Activated CD4-positive, alpha-beta memory T cell treated with anti-CD3 and anti-CD28 coated beads, Interleukin-2, amount 10 ng/mL, durations not matched to agents 7 days and 5 days (primary cell): ENCODE measurements at regions of chr21 and their contacts with region 1.

Region 1: GRCh38 chr21:42187976-42188653 is 30.8 kb upstream of the ABCG1 start:
- DNase-seq: peak; percentile 90
- H3K4me3 Mint-ChIP-seq: peak overlapping the region; percentile 28
- H3K27ac Mint-ChIP-seq: peak overlapping the region; percentile 95
- H3K4me1 Mint-ChIP-seq: peaks cover 71% of the 10 kb centered on the region
- H3K27me3 Mint-ChIP-seq: peaks cover 10% of the 10 kb centered on the region

Region 2: DNA sequence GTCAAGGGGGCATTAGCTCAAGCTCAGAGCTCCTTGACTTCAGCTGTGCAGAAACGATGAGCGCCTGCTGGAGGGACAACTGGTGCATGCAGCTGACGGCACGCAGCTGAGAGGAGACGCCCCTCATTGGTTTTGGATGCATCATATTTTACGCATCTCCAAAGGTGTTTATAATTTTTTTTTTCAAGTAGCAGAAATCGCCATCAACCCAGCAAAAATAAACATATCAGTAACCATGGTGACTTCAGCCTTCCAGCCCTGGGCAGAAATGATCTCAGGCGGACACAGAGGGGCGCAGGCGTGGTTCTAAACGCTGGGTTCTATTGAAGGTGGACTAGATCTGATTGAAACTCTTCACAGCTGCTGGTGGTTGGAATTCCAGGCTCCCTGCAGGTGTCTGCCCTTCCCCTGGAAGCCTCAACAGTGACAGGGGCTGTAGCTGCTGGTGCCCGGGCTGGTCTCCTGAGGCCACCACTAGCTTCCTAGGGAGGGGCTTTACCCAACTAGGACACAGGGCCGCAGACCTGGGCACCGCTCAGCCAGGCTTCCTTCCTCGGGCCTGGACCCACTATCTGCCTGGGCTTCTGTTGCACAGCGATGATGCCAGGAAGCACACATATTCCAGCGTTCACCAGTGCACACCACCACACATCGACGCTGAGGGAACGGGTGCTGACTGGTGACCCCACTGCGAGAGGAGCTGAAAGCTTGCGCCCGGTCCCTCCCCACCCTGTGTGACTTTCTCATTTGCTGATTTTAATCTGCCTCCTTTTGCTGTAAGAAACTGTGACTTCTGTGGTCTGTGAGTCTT is 32.9 kb before region 1 on chr21:
- CTCF ChIA-PET with region 1: no interaction called
- POLR2A ChIA-PET with region 1: no interaction called
- DNase-seq: no peak
- H3K4me3 Mint-ChIP-seq: no peak overlapping the region
- H3K27ac Mint-ChIP-seq: no peak overlapping the region
- H3K4me1 Mint-ChIP-seq: no peaks in the 10 kb centered on the region
- H3K27me3 Mint-ChIP-seq: peaks cover 10% of the 10 kb centered on the region

Region 3: DNA sequence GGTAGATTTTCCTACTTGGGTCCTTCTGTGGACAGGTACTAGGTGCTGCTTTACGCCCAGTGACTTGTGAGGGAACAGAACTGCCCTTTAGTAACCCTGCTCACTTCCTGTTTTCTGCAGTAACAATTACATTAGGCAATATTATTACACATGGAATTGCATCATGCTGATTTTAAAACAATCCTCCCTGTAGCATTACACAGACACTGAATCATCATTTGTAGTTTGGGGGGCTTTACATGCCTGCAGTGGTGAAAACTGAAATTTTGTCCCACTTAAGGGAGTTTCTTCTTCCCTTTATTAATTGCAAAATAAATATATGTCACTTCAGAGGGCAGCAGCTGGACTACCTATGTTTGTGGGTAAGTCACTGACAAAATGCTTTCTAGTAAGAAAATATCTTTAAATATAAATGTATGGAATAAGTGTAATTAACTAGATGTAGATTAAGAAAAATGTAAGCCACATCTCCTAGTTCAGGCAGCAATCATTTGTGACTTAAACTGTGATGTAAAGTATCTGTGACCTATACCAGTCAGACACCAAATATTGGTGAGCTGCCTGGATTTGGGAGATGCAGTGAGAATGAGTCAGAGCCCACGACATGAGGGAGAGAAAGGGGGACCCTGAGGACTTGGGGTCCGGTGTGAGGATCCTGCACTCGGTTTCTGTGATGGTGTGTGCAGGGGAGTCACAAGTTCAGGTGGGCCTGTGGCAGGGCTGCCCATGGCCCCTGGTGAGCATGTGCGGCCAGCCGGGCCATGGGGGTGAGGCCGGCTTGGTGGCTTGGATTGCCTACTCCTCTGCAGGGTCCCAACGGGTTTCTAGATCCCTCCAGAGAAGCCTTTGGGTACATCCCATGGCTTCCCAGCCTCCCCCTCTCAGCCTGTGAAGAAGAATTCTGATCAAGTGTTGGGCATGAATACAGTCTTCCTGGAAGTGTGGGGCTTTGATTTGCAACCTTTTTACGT is 11.7 kb after region 1 on chr21:
- CTCF ChIA-PET with region 1: no interaction called
- POLR2A ChIA-PET with region 1: interaction called, 10 read pairs
- DNase-seq: peak; percentile 19
- H3K4me3 Mint-ChIP-seq: no peak overlapping the region
- H3K27ac Mint-ChIP-seq: peak overlapping the region; percentile 60
- H3K4me1 Mint-ChIP-seq: peaks cover 34% of the 10 kb centered on the region
- H3K27me3 Mint-ChIP-seq: peaks cover 10% of the 10 kb centered on the region

Region 4: GRCh38 chr21:42233067-42233961 is 45.2 kb after region 1 on chr21:
- CTCF ChIA-PET with region 1: interaction called, 14 read pairs
- POLR2A ChIA-PET with region 1: interaction called, 246 read pairs
- DNase-seq: peak; percentile 87
- H3K4me3 Mint-ChIP-seq: peak overlapping the region; percentile 33
- H3K27ac Mint-ChIP-seq: peak overlapping the region; percentile 94
- H3K4me1 Mint-ChIP-seq: peaks cover 96% of the 10 kb centered on the region
- H3K27me3 Mint-ChIP-seq: no peaks in the 10 kb centered on the region